Gastrocnemius medialis (tissue), 4 donors: ENCODE measurements at regions of chr17 and their contacts with region 1.

Region 1: GRCh38 chr17:7910711-7911110 is 5.4 kb downstream of the RNF227 start:
- DNase-seq: no peak
- ATAC-seq: no peak
- H3K4me3 ChIP-seq: no peak overlapping the region
- H3K27ac ChIP-seq: no peak overlapping the region
- H3K4me1 ChIP-seq: peaks cover 12 to 14% of the 10 kb centered on the region in 2 donors
- H3K27me3 ChIP-seq: no peaks in the 10 kb centered on the region
- CTCF ChIP-seq: no peak
- POLR2A ChIP-seq: no peak

Region 2: DNA sequence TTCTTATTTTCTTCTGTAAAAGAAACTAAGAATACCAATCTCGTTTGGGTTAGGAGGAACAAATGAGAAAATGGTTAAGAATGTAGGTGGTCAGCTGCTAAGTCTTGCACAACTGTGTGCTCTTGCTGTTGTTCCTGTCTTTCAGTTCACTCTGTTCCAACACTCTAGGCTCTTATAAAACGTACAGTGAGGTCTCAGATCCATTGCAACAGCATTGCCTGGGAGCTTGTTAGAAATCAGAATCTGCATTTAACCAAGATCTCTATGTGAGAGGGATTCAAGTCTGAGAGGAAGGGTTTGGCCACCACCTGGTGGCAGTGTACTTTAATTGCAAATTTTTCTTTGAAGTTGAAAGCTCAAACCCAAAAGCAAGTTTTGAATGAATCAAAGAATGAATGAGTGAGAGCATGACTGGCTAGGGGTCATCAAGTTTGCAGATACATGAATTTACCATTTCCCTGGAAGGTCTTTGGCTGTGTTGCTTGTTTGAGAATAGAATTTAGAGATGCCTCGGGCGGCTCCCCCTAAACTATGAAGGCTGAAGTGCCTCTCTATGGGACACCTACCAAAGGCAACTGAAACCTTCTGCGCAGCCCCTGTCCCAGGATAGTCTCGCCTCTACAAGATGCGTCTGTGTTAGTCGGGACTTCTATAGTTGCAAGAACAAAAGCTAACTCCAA is 130.7 kb after region 1 on chr17:
- in situ Hi-C with region 1: no loop called
- intact Hi-C with region 1: loop called (anchors 1 kb)
- DNase-seq: peak in 1 of 2 donors; percentile 21
- ATAC-seq: peak; percentile 90 to 92
- H3K4me3 ChIP-seq: peak overlapping the region in 1 of 4 donors; percentile 15
- H3K27ac ChIP-seq: peak overlapping the region; percentile 54 to 61 (median 58)
- H3K4me1 ChIP-seq: peaks cover 3 to 9% of the 10 kb centered on the region in 2 donors
- H3K27me3 ChIP-seq: peaks cover 15 to 26% (median 15%) of the 10 kb centered on the region in 3 donors
- CTCF ChIP-seq: peak; percentile 28 to 54 (median 40)
- POLR2A ChIP-seq: peak in 1 of 2 donors; percentile 10